ENCODE measurements at regions of chr11 and their contacts with region 1.

Region 1: GRCh38 chr11:42770444-42771065 is 541.2 kb upstream of the API5 start:
- DNase-seq: no peak
- ATAC-seq: no peak
- H3K4me3 ChIP-seq: no peak overlapping the region
- H3K27ac ChIP-seq: no peak overlapping the region
- H3K4me1 ChIP-seq: no peaks in the 10 kb centered on the region
- H3K27me3 ChIP-seq: no peaks in the 10 kb centered on the region
- CTCF ChIP-seq: peak in 2 of 3 experiments; percentile 33 to 43; a peak in 4 of 6 replicates
- POLR2A ChIP-seq: no peak
- RAD21 ChIP-seq: no peak

Region 2: GRCh38 chr11:42175203-42175602 is 595.4 kb before region 1 on chr11:
- CTCF ChIA-PET with region 1: no interaction called
- POLR2A ChIA-PET with region 1: no interaction called
- RAD21 ChIA-PET with region 1: no interaction called
- intact Hi-C with region 1: no loop called
- DNase-seq: no peak
- ATAC-seq: no peak
- H3K4me3 ChIP-seq: no peak overlapping the region
- H3K27ac ChIP-seq: no peak overlapping the region
- H3K4me1 ChIP-seq: no peaks in the 10 kb centered on the region
- H3K27me3 ChIP-seq: no peaks in the 10 kb centered on the region
- CTCF ChIP-seq: no peak
- POLR2A ChIP-seq: no peak
- RAD21 ChIP-seq: no peak

Region 3: GRCh38 chr11:43282607-43283440 is 512.3 kb after region 1 on chr11:
- CTCF ChIA-PET with region 1: no interaction called
- POLR2A ChIA-PET with region 1: no interaction called
- RAD21 ChIA-PET with region 1: no interaction called
- intact Hi-C with region 1: loop called (anchors 5 kb)
- DNase-seq: peak; percentile 22
- ATAC-seq: peak; percentile 73
- H3K4me3 ChIP-seq: no peak overlapping the region
- H3K27ac ChIP-seq: no peak overlapping the region
- H3K4me1 ChIP-seq: no peaks in the 10 kb centered on the region
- H3K27me3 ChIP-seq: peaks cover 3% of the 10 kb centered on the region; the same call in 1 of the 2 replicates
- CTCF ChIP-seq: peak; percentile 7 to 97 (median 85); a peak in 4 of 6 replicates
- POLR2A ChIP-seq: no peak
- RAD21 ChIP-seq: peak; percentile 63